ENCODE measurements at regions of chr16 and their contacts with region 1.

Region 1: GRCh38 chr16:81204798-81205680 is 33.5 kb upstream of the BCO1 start:
- DNase-seq: peak; percentile 62
- H3K4me3 ChIP-seq: no peak overlapping the region
- H3K27ac ChIP-seq: no peak overlapping the region
- H3K4me1 ChIP-seq: no peaks in the 10 kb centered on the region
- H3K27me3 ChIP-seq: no peaks in the 10 kb centered on the region
- CTCF ChIP-seq: peak; percentile 85
- EP300 ChIP-seq: no peak
- RAD21 ChIP-seq: peak; percentile 76

Region 2: DNA sequence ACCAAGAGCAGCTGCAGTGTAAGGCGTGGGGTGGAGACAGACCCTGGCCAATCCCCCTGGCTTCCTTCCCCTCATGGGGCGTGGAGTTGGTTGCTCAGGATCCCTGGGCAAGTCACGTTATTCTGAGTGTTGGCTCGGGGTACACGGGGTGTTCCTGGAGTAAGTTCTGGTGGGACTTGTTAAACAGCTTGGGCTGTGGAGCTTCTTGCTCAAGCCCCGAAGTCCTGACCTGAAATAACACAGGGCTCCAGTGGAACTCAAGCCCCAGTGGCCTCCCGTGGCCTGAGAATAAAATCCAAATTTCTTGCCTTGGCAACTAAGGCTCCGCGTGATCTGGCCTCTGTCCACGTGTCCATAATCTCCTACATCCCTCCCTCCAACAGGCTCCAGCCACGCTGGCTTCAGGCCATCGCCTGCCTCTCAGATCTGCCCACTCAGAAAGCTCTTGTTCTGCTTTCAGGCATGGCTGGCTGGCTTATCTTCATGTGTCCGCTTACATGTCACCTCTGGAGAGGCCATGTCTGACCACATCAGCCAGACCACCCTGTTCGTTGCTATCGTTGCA is 15.9 kb before region 1 on chr16:
- CTCF ChIA-PET with region 1: interaction called, 16 read pairs
- POLR2A ChIA-PET with region 1: no interaction called
- DNase-seq: peak; percentile 46
- H3K4me3 ChIP-seq: no peak overlapping the region
- H3K27ac ChIP-seq: no peak overlapping the region
- H3K4me1 ChIP-seq: peaks cover 0 to 3% of the 10 kb centered on the region in 2 experiments; a peak in 1 of 4 replicates
- H3K27me3 ChIP-seq: no peaks in the 10 kb centered on the region
- CTCF ChIP-seq: no peak
- EP300 ChIP-seq: no peak
- RAD21 ChIP-seq: no peak

Region 3: DNA sequence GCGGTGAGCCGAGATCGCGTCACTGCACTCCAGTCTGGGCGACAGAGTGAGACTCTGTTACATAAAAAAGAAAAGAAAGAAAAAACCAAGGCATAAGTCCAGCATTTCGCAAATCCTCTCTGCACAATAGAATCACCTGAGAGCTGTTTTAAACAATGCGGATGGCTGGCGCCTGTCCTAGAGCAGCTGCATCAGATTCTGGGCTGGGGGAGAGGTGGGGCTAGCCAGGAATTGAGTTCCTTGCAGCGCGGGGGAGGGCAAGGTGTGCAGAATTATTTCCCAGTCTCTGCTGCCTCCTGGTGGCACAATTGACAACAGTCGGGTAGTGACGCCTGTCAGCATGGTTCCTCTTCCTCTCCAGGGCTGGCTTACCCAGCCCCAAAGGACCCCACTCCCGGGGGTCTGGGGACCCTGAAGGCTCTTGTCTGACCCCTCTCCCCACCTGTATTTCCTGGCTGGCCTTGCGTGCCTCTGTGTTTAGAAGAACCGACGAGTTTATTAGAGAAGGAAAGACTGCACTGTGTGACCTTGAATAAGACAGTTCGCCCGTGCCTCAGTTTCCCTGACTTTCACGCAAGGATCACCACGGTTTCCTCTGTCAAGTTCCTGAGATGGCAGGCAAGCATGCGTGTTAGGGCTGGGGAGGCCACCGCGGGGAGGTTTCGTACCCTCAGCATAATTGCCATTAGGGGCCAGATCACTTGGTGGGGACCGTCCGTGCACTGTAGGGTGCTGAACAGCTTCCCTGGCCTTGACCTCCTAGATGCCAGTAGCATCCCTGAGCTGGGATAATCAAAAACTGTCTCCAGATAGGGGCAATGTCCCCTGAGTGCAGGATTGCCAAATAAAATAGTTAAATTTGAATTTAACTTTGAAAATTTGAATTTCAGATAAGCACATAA is 533.1 kb after region 1 on chr16:
- CTCF ChIA-PET with region 1: interaction called, 15 read pairs
- POLR2A ChIA-PET with region 1: no interaction called
- DNase-seq: peak; percentile 84
- H3K4me3 ChIP-seq: peak overlapping the region in 1 of 2 experiments; percentile 52; a peak in 1 of 4 replicates
- H3K27ac ChIP-seq: no peak overlapping the region
- H3K4me1 ChIP-seq: peaks cover 0 to 4% of the 10 kb centered on the region in 2 experiments; a peak in 1 of 4 replicates
- H3K27me3 ChIP-seq: no peaks in the 10 kb centered on the region; the same call in 1 of the 2 replicates
- CTCF ChIP-seq: peak; percentile 85
- EP300 ChIP-seq: no peak
- RAD21 ChIP-seq: peak; percentile 96

Measured in SK-N-SH (cell line).